ENCODE measurements at regions of chr9 and their contacts with region 1.

Region 1: GRCh38 chr9:135907431-135908092 is at the start of gene CAMSAP1:
- DNase-seq: peak; percentile 98
- ATAC-seq: peak; percentile 81
- H3K4me3 Mint-ChIP-seq: peak within 1 kb of the TSS; percentile 81
- H3K27ac Mint-ChIP-seq: peak within 1 kb of the TSS; percentile 90
- H3K4me1 Mint-ChIP-seq: peaks cover 62% of the 10 kb centered on the region
- H3K27me3 Mint-ChIP-seq: no peaks in the 10 kb centered on the region
- total RNA-seq, gene CAMSAP1: 31.2 to 33.4 TPM

Region 2: DNA sequence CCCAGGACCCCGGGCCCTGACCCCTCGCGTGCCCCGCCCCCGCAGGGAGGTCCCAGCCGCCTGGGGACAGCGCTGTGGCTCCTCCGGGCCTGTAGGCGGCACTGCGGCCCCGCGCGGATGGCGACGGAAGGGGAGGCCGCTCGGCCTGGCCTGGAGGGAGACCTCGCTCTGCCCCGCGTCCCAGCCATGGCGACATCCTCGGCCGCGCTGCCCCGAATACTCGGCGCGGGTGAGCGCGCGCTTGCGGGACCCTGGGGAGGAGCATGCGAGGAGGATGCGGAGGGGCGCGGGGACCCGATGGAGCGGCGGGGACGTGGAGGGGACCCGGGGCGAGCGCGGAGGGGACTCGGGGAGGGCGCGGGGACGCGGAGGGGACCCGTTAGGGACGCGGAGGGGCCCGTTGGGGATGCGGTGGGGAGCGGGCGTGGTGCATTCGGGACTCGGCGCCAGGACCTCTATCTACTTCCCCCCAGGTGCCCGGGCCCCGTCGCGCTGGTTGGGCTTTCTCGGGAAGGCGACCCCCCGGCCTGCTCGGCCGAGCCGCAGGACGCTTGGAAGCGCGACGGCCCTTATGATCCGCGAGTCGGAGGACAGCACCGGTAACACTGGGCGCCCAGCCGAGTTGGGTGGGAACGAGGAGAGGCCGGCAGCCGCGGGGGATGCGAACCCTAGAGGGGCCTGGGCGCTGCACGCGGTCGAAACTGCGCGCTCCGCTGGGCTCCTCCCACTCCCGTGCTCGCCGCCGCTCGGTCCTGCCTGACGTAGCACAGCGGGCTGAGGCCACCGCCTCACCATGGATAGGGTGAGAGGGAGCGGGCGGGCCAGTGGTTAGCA is 406.8 kb before region 1 on chr9 and contains the start of gene MRPS2:
- CTCF ChIA-PET with region 1: no interaction called
- POLR2A ChIA-PET with region 1: no interaction called
- intact Hi-C with region 1: loop called in 1 of 2 experiments (anchors 2 kb)
- DNase-seq: peak; percentile 91
- ATAC-seq: peak; percentile 93
- H3K4me3 Mint-ChIP-seq: peak within 1 kb of the TSS; percentile 85
- H3K27ac Mint-ChIP-seq: peak within 1 kb of the TSS; percentile 91
- H3K4me1 Mint-ChIP-seq: peaks cover 19% of the 10 kb centered on the region
- H3K27me3 Mint-ChIP-seq: no peaks in the 10 kb centered on the region
- total RNA-seq, gene MRPS2: 50.0 to 70.6 TPM

Region 3: DNA sequence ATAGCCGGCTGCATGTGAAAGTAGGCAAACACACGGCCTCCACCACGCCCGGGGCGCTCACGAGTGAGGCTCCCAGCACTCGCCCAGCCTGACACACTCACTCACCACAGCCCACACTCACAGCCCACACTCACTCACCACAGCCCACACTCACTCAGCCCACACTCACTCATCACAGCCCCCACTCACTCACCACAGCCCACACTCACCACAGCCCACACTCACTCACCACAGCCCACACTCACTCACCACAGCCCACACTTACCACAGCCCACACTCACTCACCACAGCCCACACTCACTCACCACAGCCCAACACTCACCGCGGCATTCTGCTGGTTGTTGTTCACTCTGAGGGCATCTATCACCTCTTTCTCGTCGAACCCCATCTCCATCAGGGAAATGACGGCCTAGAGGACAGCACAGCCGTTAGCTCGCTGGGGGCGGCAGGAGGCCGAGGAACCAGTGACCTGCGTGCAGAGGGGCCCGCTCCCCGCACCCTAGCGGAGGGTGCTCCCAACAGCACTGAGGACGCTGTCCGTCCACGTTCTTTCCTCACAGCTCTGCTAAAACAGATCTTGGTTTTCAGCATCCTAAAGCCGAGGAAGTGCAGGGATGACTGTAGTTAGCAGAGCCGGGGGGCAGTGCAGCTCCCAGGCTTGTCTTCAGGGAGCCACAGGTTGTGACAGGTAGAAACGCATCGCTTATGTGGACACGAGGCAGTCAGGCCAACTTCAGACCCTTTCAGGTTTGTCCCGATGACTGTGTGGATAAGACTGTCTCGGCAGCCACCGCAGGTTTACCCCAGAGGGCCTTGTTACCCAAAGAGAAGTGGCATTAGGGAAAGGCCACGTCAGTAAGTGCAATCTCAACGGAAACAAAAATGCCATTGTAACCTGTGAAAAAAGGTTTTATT is 32.0 kb after region 1 on chr9:
- CTCF ChIA-PET with region 1: no interaction called
- POLR2A ChIA-PET with region 1: no interaction called
- intact Hi-C with region 1: loop called (anchors 1 kb)
- DNase-seq: peak; percentile 71
- ATAC-seq: peak; percentile 69
- H3K4me3 Mint-ChIP-seq: peak overlapping the region; percentile 71
- H3K27ac Mint-ChIP-seq: peak overlapping the region; percentile 84
- H3K4me1 Mint-ChIP-seq: peaks cover 8% of the 10 kb centered on the region
- H3K27me3 Mint-ChIP-seq: no peaks in the 10 kb centered on the region

Region 4: DNA sequence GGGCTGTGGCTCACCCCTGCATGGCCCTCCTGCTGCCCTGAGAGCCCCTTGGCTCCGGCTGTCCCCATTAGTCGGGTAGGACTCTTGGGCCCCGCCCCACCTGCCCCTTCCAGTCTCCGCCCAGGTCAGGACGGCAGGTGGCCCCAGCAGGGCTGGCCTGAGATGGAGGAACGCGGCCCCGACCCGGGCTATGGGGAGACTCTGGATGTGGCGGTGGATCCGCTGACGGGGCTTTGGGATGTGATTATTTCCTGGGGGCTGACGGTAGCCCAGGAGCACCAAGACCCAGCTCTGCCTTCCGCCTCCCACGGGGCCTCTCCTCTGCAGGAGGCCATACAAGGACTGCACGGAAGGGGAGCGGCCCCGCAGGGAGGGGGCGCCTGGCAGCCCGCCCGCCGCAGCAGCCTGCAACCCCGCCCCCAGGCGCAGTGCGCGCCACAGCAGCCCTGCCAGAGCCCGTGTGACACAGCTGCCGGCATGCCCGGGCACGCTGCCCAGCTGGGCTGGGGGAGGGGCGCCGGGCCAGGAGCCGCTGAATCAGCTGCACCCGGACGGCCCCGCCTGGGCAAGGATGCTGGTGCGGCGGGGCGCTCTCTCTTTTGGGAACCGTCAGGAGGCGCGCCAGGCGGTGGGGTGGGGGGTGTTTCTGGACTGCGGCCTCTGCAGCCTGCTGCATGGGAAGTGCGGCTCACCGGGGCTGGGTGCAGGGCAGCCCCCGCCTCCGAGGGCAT is 202.0 kb after region 1 on chr9:
- CTCF ChIA-PET with region 1: no interaction called
- POLR2A ChIA-PET with region 1: interaction called, 4 read pairs
- intact Hi-C with region 1: loop called (anchors 1 to 5 kb)
- DNase-seq: peak; percentile 97
- ATAC-seq: peak; percentile 88
- H3K4me3 Mint-ChIP-seq: peak overlapping the region; percentile 78
- H3K27ac Mint-ChIP-seq: peak overlapping the region; percentile 97
- H3K4me1 Mint-ChIP-seq: peaks cover 71% of the 10 kb centered on the region
- H3K27me3 Mint-ChIP-seq: no peaks in the 10 kb centered on the region

Region 5: DNA sequence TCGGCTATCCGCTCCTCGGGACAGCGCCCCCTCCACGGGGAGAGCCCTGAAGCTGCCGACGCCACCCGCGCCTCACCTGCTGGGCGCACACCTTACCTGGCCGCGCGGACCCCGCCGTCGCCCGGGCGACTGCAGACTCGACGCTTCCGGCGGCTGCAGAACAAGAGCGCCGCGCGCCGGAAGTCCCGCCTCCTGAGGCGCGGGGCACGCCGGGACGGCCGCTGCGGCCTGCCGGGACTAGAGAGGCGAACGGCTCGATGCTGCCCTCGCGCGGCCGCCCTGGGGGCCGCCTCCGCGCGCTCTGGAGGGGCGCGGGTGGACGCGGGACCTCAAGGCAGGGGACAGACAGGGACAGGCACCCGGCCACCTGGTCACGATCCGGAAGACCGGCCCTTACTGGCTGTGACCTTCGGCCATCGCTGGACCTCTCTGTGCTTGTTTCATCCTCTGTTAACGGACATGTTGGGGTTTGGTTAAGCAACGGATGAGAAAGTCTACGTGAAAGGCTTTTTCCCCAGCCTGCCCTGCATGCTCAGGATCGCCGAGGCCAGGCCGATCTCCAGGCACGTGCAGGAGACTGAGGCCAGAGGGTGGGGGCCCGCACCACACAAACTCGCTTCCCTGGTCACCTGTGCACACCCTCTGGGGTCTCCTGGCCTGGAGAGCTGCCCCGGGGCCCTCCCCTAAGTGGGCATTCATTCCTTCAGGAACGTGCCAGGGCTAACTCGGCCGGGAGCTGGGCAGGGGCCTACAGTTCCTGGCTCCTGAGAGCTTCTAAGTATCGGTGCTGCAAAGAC is 492.7 kb after region 1 on chr9 and contains the start of gene SNAPC4:
- CTCF ChIA-PET with region 1: no interaction called
- POLR2A ChIA-PET with region 1: no interaction called
- intact Hi-C with region 1: loop called in 1 of 2 experiments (anchors 5 kb)
- DNase-seq: peak; percentile 93
- ATAC-seq: peak; percentile 68
- H3K4me3 Mint-ChIP-seq: peak within 1 kb of the TSS; percentile 86
- H3K27ac Mint-ChIP-seq: peak within 1 kb of the TSS; percentile 80
- H3K4me1 Mint-ChIP-seq: peaks cover 50% of the 10 kb centered on the region
- H3K27me3 Mint-ChIP-seq: no peaks in the 10 kb centered on the region
- total RNA-seq, gene SNAPC4: 12.4 to 16.8 TPM

Region 6: DNA sequence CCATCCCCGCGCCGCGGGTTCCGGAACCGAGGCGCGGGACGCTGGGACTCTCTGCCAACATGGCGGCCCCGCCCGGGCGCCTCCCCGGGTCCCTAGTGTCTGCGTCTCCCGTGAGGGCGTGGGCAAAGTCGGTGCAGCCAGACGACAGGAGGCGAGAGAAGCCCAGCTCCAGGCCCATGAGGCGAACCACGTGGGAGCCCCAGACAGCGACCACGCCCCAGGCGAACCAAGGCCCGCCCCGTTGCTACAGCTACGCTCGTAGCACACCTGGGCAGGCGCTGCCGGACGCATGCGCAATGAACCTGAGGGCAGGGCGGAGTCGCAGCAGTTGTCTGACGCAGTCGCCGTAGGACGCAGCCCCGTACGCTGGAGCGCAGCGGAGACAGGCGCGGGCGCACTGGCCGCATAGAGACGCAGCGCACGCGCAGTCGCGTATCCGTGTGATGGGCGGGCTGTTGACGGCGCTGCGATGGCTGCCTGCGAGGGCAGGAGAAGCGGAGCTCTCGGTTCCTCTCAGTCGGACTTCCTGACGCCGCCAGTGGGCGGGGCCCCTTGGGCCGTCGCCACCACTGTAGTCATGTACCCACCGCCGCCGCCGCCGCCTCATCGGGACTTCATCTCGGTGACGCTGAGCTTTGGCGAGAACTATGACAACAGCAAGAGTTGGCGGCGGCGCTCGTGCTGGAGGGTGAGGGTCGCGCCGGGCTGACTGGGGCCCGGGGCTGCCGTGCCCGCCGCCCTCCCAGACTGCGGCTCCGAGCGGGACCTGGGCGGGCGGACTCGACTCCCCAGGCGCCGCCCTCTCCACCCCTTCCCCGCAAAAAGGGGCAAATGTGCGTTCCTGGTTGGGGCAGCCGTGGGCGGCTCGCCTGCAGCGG is 1179.2 kb after region 1 on chr9 and contains the start of gene MAN1B1:
- CTCF ChIA-PET with region 1: no interaction called
- POLR2A ChIA-PET with region 1: no interaction called
- intact Hi-C with region 1: loop called in 1 of 2 experiments (anchors 5 kb)
- DNase-seq: peak; percentile 100
- ATAC-seq: peak; percentile 85
- H3K4me3 Mint-ChIP-seq: peak within 1 kb of the TSS; percentile 88
- H3K27ac Mint-ChIP-seq: peak within 1 kb of the TSS; percentile 96
- H3K4me1 Mint-ChIP-seq: peaks cover 46% of the 10 kb centered on the region
- H3K27me3 Mint-ChIP-seq: no peaks in the 10 kb centered on the region
- total RNA-seq, gene MAN1B1: 21.6 to 26.7 TPM

Measured in activated CD4-positive, alpha-beta T cell treated with anti-CD3 and anti-CD28 coated beads for 36 hours (primary cell).